Mammary epithelial cell (primary cell): ENCODE measurements at regions of chr1 and their contacts with region 1.

Region 1: GRCh38 chr1:11285883-11286734 is 13.1 kb downstream of the UBIAD1 start:
- DNase-seq: no peak
- H3K4me3 ChIP-seq: no peak overlapping the region
- H3K27ac ChIP-seq: no peak overlapping the region
- H3K4me1 ChIP-seq: no peaks in the 10 kb centered on the region
- H3K27me3 ChIP-seq: no peaks in the 10 kb centered on the region
- CTCF ChIP-seq: peak; percentile 23 to 44

Region 2: GRCh38 chr1:11227106-11228077 is 58.7 kb before region 1 on chr1:
- CTCF ChIA-PET with region 1: no interaction called
- dilution Hi-C with region 1: loop called (anchors 5 kb)
- in situ Hi-C with region 1: no loop called
- intact Hi-C with region 1: no loop called
- DNase-seq: no peak
- H3K4me3 ChIP-seq: no peak overlapping the region
- H3K27ac ChIP-seq: no peak overlapping the region
- H3K4me1 ChIP-seq: no peaks in the 10 kb centered on the region
- H3K27me3 ChIP-seq: no peaks in the 10 kb centered on the region
- CTCF ChIP-seq: no peak

Region 3: GRCh38 chr1:11337580-11338073 is 51.5 kb after region 1 on chr1:
- CTCF ChIA-PET with region 1: no interaction called
- dilution Hi-C with region 1: loop called (anchors 5 kb)
- in situ Hi-C with region 1: no loop called
- intact Hi-C with region 1: no loop called
- DNase-seq: no peak
- H3K4me3 ChIP-seq: no peak overlapping the region
- H3K27ac ChIP-seq: no peak overlapping the region
- H3K4me1 ChIP-seq: peaks cover 10% of the 10 kb centered on the region
- H3K27me3 ChIP-seq: no peaks in the 10 kb centered on the region
- CTCF ChIP-seq: peak; percentile 46 to 66

Region 4: GRCh38 chr1:11364170-11364569 is 78.1 kb after region 1 on chr1:
- CTCF ChIA-PET with region 1: interaction called, 3 read pairs
- dilution Hi-C with region 1: no loop called
- in situ Hi-C with region 1: no loop called
- intact Hi-C with region 1: loop called (anchors 5 kb)
- DNase-seq: no peak
- H3K4me3 ChIP-seq: no peak overlapping the region
- H3K27ac ChIP-seq: no peak overlapping the region
- H3K4me1 ChIP-seq: no peaks in the 10 kb centered on the region
- H3K27me3 ChIP-seq: peaks cover 4% of the 10 kb centered on the region
- CTCF ChIP-seq: peak; percentile 32 to 58

Region 5: DNA sequence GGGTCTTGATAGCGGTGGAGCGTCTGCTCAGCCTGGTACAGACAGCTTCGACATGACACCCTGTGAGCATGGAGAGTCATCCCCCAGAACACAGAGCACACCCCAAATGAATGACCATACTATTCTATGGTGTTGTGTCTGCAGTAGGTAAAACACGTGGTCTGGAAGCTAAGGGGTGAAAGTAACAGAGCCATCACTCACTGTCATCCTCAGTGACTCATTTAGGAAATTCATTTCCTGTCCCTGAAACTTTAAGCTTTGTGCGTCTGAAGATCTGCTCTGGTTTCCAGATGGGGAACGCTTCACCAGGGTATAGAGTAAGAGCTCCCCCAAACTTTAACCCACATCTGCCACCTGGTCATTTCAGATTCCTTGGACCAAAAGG is 98.1 kb after region 1 on chr1:
- CTCF ChIA-PET with region 1: no interaction called
- dilution Hi-C with region 1: loop called (anchors 5 kb)
- in situ Hi-C with region 1: no loop called
- intact Hi-C with region 1: no loop called
- DNase-seq: peak; percentile 52
- H3K4me3 ChIP-seq: no peak overlapping the region
- H3K27ac ChIP-seq: no peak overlapping the region
- H3K4me1 ChIP-seq: peaks cover 17% of the 10 kb centered on the region
- H3K27me3 ChIP-seq: no peaks in the 10 kb centered on the region
- CTCF ChIP-seq: no peak